ENCODE measurements at regions of chr5 and their contacts with region 1.

Region 1: GRCh38 chr5:74673011-74673790 is 11.8 kb upstream of the HEXB start:
- DNase-seq: peak; percentile 59
- ATAC-seq: peak; percentile 64
- H3K4me3 ChIP-seq: no peak overlapping the region
- H3K27ac ChIP-seq: no peak overlapping the region
- H3K4me1 ChIP-seq: no peaks in the 10 kb centered on the region
- H3K27me3 ChIP-seq: no peaks in the 10 kb centered on the region
- CTCF ChIP-seq: peak; percentile 53

Region 2: DNA sequence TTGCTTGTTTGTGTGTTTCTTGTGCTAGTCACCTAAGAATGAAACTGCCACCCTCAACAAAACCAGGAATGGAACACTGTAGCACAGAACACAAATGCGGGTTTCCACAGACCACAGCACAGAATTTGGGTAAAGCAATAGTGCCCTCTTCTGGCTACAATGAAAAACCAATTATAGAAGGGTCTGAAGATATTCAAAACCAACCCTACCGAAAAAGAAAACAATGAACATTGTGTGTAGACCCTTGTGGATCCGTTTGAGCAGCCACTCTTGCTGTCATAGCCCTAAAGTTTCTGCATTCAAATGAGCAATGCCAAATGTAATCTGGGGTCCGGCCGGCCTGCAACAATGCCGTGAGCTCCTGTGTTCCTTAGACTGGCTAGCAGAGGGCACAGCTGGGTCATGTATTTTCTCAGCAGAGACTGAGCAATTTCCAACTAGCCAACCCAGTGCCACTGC is 24.3 kb before region 1 on chr5:
- CTCF ChIA-PET with region 1: no interaction called
- POLR2A ChIA-PET with region 1: no interaction called
- intact Hi-C with region 1: no loop called
- DNase-seq: peak; percentile 71
- ATAC-seq: peak; percentile 94
- H3K4me3 ChIP-seq: peak overlapping the region; percentile 38; the same call in 1 of the 2 replicates
- H3K27ac ChIP-seq: no peak overlapping the region
- H3K4me1 ChIP-seq: peaks cover 21% of the 10 kb centered on the region
- H3K27me3 ChIP-seq: no peaks in the 10 kb centered on the region
- CTCF ChIP-seq: peak; percentile 81

Region 3: GRCh38 chr5:74684900-74685851 is 12.0 kb after region 1 on chr5 and contains the start of gene HEXB:
- CTCF ChIA-PET with region 1: no interaction called
- POLR2A ChIA-PET with region 1: no interaction called
- intact Hi-C with region 1: no loop called
- DNase-seq: peak; percentile 75
- ATAC-seq: peak; percentile 93
- H3K4me3 ChIP-seq: peak within 1 kb of the TSS; percentile 93
- H3K27ac ChIP-seq: 0 out of 2 replicates have a peak within 1 kb of the TSS, but pooled peaks have one; percentile 9
- H3K4me1 ChIP-seq: peaks cover 18% of the 10 kb centered on the region; the same call in 1 of the 2 replicates
- H3K27me3 ChIP-seq: no peaks in the 10 kb centered on the region
- CTCF ChIP-seq: no peak
- total RNA-seq, gene HEXB: 91.5 and 131 TPM in 2 replicates

Region 4: DNA sequence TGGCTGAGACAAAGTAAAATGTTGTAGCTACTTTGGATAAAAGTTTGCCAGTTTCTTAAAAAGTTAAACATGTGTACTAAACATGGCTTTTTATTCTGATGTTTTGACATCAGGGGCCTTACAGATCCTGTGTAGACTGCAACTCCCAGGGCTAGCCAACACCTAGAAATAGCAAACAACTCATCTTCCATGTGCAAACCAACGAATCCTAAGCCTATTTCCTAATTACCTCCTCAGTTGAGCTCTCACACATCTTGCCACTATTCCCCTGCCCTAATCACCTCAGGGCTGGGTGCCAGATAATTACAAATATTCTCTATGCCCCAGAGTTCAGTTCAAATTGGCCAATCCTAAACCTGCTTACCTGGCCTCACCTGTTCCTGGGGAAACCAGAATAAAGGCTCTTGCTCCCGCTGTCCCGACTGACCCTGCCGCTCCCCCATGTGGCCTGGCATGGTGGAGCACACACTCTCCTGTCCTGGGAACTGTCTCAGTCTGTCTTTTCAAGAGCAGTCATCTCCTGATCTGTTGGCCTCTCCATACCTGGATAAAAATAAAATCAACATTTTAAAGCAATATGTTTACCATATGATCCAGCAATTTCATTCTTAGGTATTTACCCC is 230.1 kb after region 1 on chr5:
- CTCF ChIA-PET with region 1: no interaction called
- POLR2A ChIA-PET with region 1: no interaction called
- intact Hi-C with region 1: loop called (anchors 5 kb)
- DNase-seq: peak; percentile 64
- ATAC-seq: peak; percentile 96
- H3K4me3 ChIP-seq: no peak overlapping the region
- H3K27ac ChIP-seq: no peak overlapping the region
- H3K4me1 ChIP-seq: no peaks in the 10 kb centered on the region
- H3K27me3 ChIP-seq: no peaks in the 10 kb centered on the region
- CTCF ChIP-seq: peak; percentile 72

Region 5: DNA sequence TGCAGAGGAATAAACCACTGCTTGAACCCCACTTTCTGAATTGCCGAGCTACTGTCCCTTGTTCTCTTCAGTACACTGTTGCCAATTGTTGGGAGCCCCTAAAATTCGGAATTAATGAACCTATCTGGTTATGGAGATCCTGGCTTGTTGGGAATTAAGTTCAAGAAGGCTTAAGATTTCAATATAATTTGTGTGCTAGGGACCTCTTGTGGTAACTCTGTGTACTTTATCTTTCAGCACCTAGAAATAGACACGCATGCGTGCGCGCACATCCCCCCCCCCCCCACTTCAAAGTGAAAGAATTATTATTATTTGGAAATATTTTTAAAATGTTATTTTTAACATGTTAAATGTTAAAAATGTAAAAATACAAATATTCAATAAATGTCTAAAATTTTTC is 246.3 kb after region 1 on chr5:
- CTCF ChIA-PET with region 1: no interaction called
- POLR2A ChIA-PET with region 1: no interaction called
- intact Hi-C with region 1: loop called (anchors 1 kb)
- DNase-seq: peak; percentile 63
- ATAC-seq: no peak; the same call in 1 of the 2 replicates
- H3K4me3 ChIP-seq: no peak overlapping the region
- H3K27ac ChIP-seq: no peak overlapping the region
- H3K4me1 ChIP-seq: peaks cover 8% of the 10 kb centered on the region; the same call in 1 of the 2 replicates
- H3K27me3 ChIP-seq: no peaks in the 10 kb centered on the region
- CTCF ChIP-seq: peak; percentile 50; the same call in 1 of the 2 replicates

Region 6: DNA sequence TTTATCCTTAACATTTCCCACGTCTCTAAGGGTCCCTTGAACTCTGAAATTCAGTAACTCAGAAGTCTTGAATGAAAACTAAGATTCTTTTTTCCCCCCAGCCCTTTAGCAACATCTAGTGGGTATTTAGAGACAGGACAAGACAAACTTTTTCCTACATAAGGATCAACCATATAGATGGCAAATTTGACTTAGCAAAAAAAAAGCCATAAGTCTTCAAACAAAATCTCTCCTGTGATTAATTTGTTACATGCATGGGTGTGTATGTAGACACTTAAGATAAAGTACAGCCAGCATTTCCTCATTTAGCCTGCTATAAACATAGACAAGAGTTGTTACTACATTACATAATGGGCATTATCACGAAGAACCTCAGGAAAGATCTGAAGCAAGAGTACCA is 592.5 kb after region 1 on chr5:
- CTCF ChIA-PET with region 1: no interaction called
- POLR2A ChIA-PET with region 1: no interaction called
- intact Hi-C with region 1: loop called (anchors 10 kb)
- DNase-seq: peak; percentile 56
- ATAC-seq: peak; percentile 33; the same call in 1 of the 2 replicates
- H3K4me3 ChIP-seq: no peak overlapping the region
- H3K27ac ChIP-seq: no peak overlapping the region
- H3K4me1 ChIP-seq: no peaks in the 10 kb centered on the region
- H3K27me3 ChIP-seq: no peaks in the 10 kb centered on the region
- CTCF ChIP-seq: peak; percentile 64

Region 7: DNA sequence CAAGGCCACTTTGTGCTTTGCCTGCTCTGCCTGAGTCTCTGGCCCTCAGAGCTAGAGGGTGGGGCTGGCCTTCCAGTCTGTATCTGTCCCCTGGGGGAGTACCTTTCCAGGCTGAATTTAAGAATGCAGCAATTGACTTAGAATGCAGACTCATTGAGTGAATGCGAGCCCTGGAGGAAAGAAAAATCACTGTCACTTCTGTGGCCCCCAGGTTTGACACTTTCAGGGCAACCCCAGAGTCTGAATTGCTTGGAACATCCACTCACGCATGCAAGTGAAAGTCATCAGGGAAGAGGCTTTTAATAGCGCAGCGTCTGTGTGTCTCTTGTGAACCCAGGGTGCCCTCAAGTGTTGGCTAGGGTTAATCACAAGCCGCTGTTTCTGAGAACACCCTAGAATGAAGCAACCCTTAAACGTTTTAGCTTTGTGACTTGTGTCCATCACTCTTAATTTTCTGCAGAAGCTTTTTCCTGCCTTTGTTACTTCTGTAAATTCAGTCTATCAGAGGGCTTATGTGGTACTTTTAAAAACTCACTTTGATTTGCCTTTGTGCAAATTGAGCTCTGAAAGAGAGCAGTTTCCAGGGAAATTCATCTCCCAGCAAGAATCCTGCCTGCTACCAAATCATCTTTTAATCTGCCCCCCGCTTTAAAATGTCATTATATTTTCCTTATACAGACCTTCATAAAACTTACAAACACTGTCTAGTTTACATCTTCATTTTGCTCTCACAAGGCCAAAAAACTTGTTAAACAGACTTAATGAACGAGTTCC is 1583.1 kb after region 1 on chr5:
- CTCF ChIA-PET with region 1: no interaction called
- POLR2A ChIA-PET with region 1: no interaction called
- intact Hi-C with region 1: loop called (anchors 10 kb)
- DNase-seq: peak; percentile 62
- ATAC-seq: peak; percentile 84
- H3K4me3 ChIP-seq: no peak overlapping the region
- H3K27ac ChIP-seq: no peak overlapping the region
- H3K4me1 ChIP-seq: no peaks in the 10 kb centered on the region
- H3K27me3 ChIP-seq: no peaks in the 10 kb centered on the region
- CTCF ChIP-seq: peak; percentile 65; the same call in 1 of the 2 replicates

Measured in PC-3 (cell line).